Adrenal gland (tissue), 19 donors: ENCODE measurements at regions of chr6 and their contacts with region 1.

Region 1: DNA sequence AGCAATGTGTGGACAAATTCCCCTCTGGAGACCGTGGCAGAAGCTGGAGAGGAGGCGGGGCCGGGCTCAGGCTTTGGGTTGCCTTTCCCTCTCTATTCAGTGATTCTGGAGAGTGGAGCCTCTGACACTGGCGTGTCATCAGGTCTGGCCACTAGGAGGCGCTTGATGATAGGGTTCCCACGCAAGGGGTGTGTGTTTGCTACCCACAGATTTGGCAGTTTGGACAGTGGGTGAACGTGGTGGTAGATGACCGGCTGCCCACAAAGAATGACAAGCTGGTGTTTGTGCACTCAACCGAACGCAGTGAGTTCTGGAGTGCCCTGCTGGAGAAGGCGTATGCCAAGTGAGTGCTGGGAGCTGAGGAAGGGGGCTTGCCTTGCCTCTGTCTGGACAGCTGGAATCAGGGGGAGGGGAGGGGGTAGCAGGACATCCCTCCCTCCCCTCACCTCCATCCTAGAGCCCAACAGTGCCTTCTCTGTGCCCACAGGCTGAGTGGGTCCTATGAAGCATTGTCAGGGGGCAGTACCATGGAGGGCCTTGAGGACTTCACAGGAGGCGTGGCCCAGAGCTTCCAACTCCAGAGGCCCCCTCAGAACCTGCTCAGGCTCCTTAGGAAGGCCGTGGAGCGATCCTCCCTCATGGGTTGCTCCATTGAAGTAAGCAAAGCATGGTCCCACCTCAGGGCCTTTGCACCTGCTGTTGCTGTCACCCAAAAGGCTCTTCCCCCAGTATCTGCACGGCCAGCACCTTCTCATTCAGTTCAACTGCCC is 14.3 kb downstream of the CAPN11 start:
- DNase-seq: peak; percentile 81 to 96 (median 90)
- H3K4me3 ChIP-seq: no peak overlapping the region
- H3K27ac ChIP-seq: no peak overlapping the region
- H3K4me1 ChIP-seq: peaks cover 0 to 5% of the 10 kb centered on the region in 2 donors
- H3K27me3 ChIP-seq: no peaks in the 10 kb centered on the region
- CTCF ChIP-seq: peak; percentile 80 to 96 (median 94)
- POLR2A ChIP-seq: no peak

Region 2: DNA sequence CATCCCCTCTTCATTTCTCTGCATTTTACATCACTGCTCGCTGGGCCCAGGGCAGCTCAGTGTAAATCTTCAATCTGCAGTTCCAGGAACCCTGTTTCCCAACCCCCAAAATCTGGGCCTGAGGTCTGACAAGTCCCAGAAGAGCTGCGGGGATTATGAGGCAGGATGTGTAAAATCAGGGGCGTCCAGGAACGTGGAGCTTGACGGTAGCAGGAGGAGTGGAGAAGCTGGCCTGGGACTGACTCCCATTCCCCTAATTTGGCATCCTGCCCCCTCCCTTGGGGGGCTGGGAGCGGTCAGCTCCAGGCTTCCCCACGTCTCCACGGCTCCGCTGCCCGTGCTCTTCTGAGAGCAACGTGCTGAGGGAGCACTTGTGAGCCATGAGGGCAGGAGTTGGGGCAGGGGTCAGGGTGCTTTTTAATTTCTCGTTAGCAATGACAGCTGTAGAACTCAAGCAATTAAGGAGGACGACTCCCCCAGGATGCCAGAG is 426.3 kb before region 1 on chr6:
- intact Hi-C with region 1: no loop called
- DNase-seq: peak in 2 of 7 donors; percentile 7 to 12
- H3K4me3 ChIP-seq: no peak overlapping the region
- H3K27ac ChIP-seq: no peak overlapping the region
- H3K4me1 ChIP-seq: no peaks in the 10 kb centered on the region
- H3K27me3 ChIP-seq: no peaks in the 10 kb centered on the region
- CTCF ChIP-seq: no peak
- POLR2A ChIP-seq: no peak

Region 3: DNA sequence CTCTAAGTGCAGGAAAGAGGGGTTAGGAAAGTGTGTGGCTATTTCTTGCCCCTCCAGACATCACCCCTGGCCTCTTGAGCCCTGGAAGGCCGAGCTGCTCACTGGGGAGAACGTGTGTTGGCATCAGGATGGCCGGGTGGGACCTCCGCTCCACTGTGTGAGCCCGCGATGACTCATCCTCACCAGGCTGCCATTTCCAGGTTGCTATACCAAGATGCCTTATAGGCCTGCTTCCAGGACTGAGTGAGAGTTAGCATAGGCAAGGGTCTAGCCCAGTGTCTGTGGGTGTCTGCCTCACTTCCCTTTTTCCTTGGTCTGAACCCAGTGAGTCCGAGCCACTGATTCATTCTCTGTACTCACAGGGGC is 150.6 kb before region 1 on chr6:
- intact Hi-C with region 1: no loop called
- DNase-seq: no peak
- H3K4me3 ChIP-seq: no peak overlapping the region
- H3K27ac ChIP-seq: no peak overlapping the region
- H3K4me1 ChIP-seq: peaks cover 0 to 5% of the 10 kb centered on the region in 2 donors
- H3K27me3 ChIP-seq: no peaks in the 10 kb centered on the region
- CTCF ChIP-seq: no peak
- POLR2A ChIP-seq: no peak

Region 4: DNA sequence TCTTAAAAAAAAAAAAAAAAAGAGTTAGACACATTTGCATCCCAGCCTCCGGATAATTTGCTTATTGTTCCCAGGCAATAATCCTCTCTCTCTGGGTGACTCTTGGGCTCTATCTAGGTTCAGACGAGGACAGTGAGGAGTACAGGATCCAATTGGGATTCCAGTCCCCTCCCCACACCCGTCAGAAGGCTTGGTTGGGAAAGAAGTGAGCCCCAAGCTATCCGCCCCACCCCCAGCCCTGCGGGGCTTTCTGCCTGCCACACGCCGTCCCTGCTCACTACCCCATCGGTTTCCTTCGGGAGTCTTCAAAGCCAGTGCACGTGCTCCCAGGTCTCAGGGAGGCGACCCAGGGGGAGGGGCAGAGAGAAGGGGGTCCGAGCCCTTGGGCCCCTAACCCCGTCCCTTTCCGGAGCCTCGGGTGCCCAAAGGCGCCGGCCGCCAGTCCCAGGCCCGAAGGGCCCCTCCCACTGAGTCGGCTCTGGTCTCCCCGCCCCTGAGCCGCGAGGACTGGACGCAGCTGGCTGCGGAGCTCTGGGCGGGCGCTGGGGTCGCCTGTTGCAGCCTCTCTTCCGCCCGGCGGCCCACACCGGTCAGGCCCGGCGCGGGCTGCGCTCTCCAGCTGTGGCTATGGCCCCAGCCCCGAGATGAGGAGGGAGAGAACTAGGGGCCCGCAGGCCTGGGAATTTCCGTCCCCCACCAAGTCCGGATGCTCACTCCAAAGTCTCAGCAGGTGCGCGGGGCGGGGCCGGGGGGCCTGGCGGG is 46.3 kb after region 1 on chr6:
- intact Hi-C with region 1: loop called in 1 of 2 experiments (anchors 5 kb)
- DNase-seq: peak; percentile 79 to 91 (median 86)
- H3K4me3 ChIP-seq: peak overlapping the region in 3 of 4 donors; percentile 18 to 82 (median 49)
- H3K27ac ChIP-seq: peak overlapping the region; percentile 37 to 91 (median 89)
- H3K4me1 ChIP-seq: peaks cover 37 to 63% of the 10 kb centered on the region in 2 donors
- H3K27me3 ChIP-seq: no peaks in the 10 kb centered on the region
- CTCF ChIP-seq: no peak
- POLR2A ChIP-seq: peak; percentile 66 to 83

Region 5: GRCh38 chr6:44237813-44238433 is 65.0 kb after region 1 on chr6:
- intact Hi-C with region 1: loop called (anchors 2 to 5 kb)
- DNase-seq: peak; percentile 85 to 94 (median 90)
- H3K4me3 ChIP-seq: peak overlapping the region in 3 of 4 donors; percentile 41 to 72 (median 61)
- H3K27ac ChIP-seq: peak overlapping the region; percentile 93 to 98 (median 97)
- H3K4me1 ChIP-seq: peaks cover 27 to 32% of the 10 kb centered on the region in 2 donors
- H3K27me3 ChIP-seq: no peaks in the 10 kb centered on the region
- CTCF ChIP-seq: peak; percentile 94 to 99 (median 97)
- POLR2A ChIP-seq: peak; percentile 16 to 39